ENCODE measurements at regions of chr15 and their contacts with region 1.

Region 1: GRCh38 chr15:80580106-80580505 is 115.0 kb upstream of the ABHD17C start:
- DNase-seq: peak; percentile 98
- H3K4me3 Mint-ChIP-seq: peak overlapping the region; percentile 1
- H3K27ac Mint-ChIP-seq: peak overlapping the region; percentile 91
- H3K4me1 Mint-ChIP-seq: peaks cover 35% of the 10 kb centered on the region
- H3K27me3 Mint-ChIP-seq: no peaks in the 10 kb centered on the region
- CTCF ChIP-seq: no peak

Region 2: DNA sequence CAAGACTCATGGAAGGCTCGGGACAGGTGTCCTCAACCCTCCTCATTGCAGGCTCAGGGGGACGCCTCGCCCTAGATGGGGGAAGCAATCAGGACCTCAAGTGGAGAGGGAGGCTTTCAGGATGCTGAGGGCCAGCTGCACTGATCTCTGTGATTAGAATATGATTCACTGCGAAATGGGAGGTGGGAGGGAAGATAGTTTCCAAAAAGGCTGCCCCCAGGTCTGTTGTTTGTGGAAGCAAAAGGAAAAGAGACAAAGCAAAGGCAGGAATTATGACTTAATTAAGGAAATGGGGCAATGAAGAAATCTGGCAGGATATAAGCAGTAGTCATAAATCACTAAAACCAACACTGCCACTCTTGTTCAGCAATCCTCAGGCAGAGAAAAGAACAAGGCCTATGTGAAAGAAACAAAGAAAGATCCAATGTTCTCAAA is 29.4 kb after region 1 on chr15:
- CTCF ChIA-PET with region 1: interaction called, 4 read pairs
- POLR2A ChIA-PET with region 1: interaction called, 35 read pairs
- intact Hi-C with region 1: no loop called
- DNase-seq: peak; percentile 75
- H3K4me3 Mint-ChIP-seq: no peak overlapping the region
- H3K27ac Mint-ChIP-seq: peak overlapping the region; percentile 68
- H3K4me1 Mint-ChIP-seq: peaks cover 24% of the 10 kb centered on the region
- H3K27me3 Mint-ChIP-seq: no peaks in the 10 kb centered on the region
- CTCF ChIP-seq: no peak

Region 3: DNA sequence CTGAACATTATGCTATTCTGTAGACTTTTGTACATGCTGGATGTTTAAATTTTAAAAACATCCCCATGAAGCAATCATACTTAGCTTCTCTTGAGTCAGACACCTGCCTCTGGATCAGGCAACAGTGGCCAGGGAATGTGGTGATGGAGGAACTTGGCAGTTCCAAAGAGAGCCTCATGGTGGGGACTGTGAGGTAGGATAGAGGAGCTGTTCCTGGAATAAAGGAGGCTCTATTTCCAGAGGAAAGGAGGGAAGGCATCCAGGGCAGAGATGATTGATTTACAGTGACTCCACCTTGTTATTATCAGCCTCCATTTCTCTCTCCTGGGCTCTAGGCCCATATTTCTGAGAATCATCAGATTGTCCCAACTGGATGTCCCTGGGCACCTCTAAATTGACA is 80.0 kb after region 1 on chr15:
- CTCF ChIA-PET with region 1: interaction called, 4 read pairs
- POLR2A ChIA-PET with region 1: interaction called, 14 read pairs
- intact Hi-C with region 1: no loop called
- DNase-seq: peak; percentile 63
- H3K4me3 Mint-ChIP-seq: no peak overlapping the region
- H3K27ac Mint-ChIP-seq: no peak overlapping the region
- H3K4me1 Mint-ChIP-seq: peaks cover 17% of the 10 kb centered on the region
- H3K27me3 Mint-ChIP-seq: no peaks in the 10 kb centered on the region
- CTCF ChIP-seq: peak; percentile 48